GM12878 (cell line): ENCODE measurements at regions of chr5 and their contacts with region 1.

Region 1: GRCh38 chr5:149667084-149667828 is 62.9 kb upstream of the PPARGC1B start:
- DNase-seq: peak; percentile 38
- ATAC-seq: peak; percentile 90
- H3K4me3 ChIP-seq: no peak overlapping the region
- H3K27ac ChIP-seq: no peak overlapping the region
- H3K4me1 ChIP-seq: no peaks in the 10 kb centered on the region
- H3K27me3 ChIP-seq: no peaks in the 10 kb centered on the region; a peak in 1 of 4 replicates
- CTCF ChIP-seq: peak; percentile 74 to 95 (median 83)
- EP300 ChIP-seq: no peak
- POLR2A ChIP-seq: no peak
- RAD21 ChIP-seq: peak; percentile 75

Region 2: GRCh38 chr5:149646564-149646963 is 20.7 kb before region 1 on chr5:
- CTCF ChIA-PET with region 1: interaction called, 17 read pairs
- POLR2A ChIA-PET with region 1: interaction called, 3 read pairs
- RAD21 ChIA-PET with region 1: interaction called, 8 read pairs
- SMC1A ChIA-PET with region 1: interaction called, 18 read pairs
- in situ Hi-C with region 1: no loop called
- intact Hi-C with region 1: no loop called
- DNase-seq: no peak
- ATAC-seq: no peak
- H3K4me3 ChIP-seq: no peak overlapping the region
- H3K27ac ChIP-seq: no peak overlapping the region
- H3K4me1 ChIP-seq: no peaks in the 10 kb centered on the region
- H3K27me3 ChIP-seq: no peaks in the 10 kb centered on the region
- CTCF ChIP-seq: no peak
- EP300 ChIP-seq: no peak
- POLR2A ChIP-seq: no peak
- RAD21 ChIP-seq: no peak

Region 3: GRCh38 chr5:149731639-149732323 is 64.5 kb after region 1 on chr5:
- CTCF ChIA-PET with region 1: interaction called, 24 read pairs
- POLR2A ChIA-PET with region 1: interaction called, 7 read pairs
- RAD21 ChIA-PET with region 1: interaction called, 16 read pairs
- SMC1A ChIA-PET with region 1: interaction called, 12 read pairs
- in situ Hi-C with region 1: no loop called
- intact Hi-C with region 1: loop called (anchors 2 kb)
- DNase-seq: peak; percentile 62
- ATAC-seq: peak; percentile 77
- H3K4me3 ChIP-seq: peak overlapping the region; percentile 100
- H3K27ac ChIP-seq: peak overlapping the region; percentile 82
- H3K4me1 ChIP-seq: no peaks in the 10 kb centered on the region; the same call in 1 of the 2 replicates
- H3K27me3 ChIP-seq: no peaks in the 10 kb centered on the region
- CTCF ChIP-seq: no peak
- EP300 ChIP-seq: no peak
- POLR2A ChIP-seq: peak; percentile 77
- RAD21 ChIP-seq: no peak

Region 4: GRCh38 chr5:149775785-149776184 is 108.5 kb after region 1 on chr5:
- CTCF ChIA-PET with region 1: interaction called, 85 read pairs
- POLR2A ChIA-PET with region 1: interaction called, 16 read pairs
- RAD21 ChIA-PET with region 1: interaction called, 47 read pairs
- SMC1A ChIA-PET with region 1: interaction called, 53 read pairs
- in situ Hi-C with region 1: no loop called
- intact Hi-C with region 1: loop called (anchors 5 kb)
- DNase-seq: peak; percentile 23
- ATAC-seq: peak; percentile 72
- H3K4me3 ChIP-seq: no peak overlapping the region
- H3K27ac ChIP-seq: peak overlapping the region; percentile 67
- H3K4me1 ChIP-seq: peaks cover 55% of the 10 kb centered on the region
- H3K27me3 ChIP-seq: no peaks in the 10 kb centered on the region
- CTCF ChIP-seq: peak; percentile 62 to 72 (median 63)
- EP300 ChIP-seq: no peak
- POLR2A ChIP-seq: no peak
- RAD21 ChIP-seq: peak; percentile 51

Region 5: GRCh38 chr5:149816661-149817060 is 149.4 kb after region 1 on chr5:
- CTCF ChIA-PET with region 1: interaction called, 19 read pairs
- POLR2A ChIA-PET with region 1: interaction called, 3 read pairs
- RAD21 ChIA-PET with region 1: interaction called, 6 read pairs
- SMC1A ChIA-PET with region 1: interaction called, 210 read pairs
- in situ Hi-C with region 1: no loop called
- intact Hi-C with region 1: no loop called
- DNase-seq: no peak
- ATAC-seq: no peak
- H3K4me3 ChIP-seq: no peak overlapping the region
- H3K27ac ChIP-seq: no peak overlapping the region
- H3K4me1 ChIP-seq: peaks cover 1% of the 10 kb centered on the region; the same call in 1 of the 2 replicates
- H3K27me3 ChIP-seq: no peaks in the 10 kb centered on the region
- CTCF ChIP-seq: no peak
- EP300 ChIP-seq: no peak
- POLR2A ChIP-seq: no peak
- RAD21 ChIP-seq: no peak

Region 6: DNA sequence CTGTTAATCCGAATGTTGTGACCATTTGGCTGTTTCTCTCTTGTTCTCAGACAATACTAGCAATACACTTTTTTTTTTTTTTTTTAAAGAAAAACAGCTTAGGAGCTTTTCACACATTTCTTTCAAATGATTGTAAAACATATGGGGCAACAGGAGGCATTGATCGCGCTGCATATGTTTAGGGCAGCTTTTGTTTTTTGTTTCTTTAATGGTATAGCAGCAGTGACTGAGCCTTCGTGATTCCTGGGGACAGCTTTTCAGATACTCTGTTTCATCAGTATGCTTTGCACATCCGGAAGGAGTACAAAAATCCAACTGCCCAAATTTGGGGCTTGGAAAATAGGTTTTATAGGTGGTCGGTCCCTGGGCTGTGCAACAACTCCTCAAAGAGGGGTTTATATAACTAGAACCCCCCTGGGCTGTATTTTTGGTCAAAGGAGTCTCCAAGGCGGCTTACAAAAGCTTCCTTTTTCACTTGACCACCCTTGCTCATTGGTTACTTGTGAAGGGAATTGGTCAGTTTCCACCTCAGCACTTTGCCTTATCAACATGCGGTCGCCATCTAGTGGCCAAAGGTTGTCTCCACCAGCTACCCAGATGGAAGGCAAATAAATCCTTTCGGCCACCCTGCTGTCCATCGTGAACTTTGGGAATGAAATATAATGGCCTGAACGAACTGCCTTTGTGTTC is 185.5 kb after region 1 on chr5:
- CTCF ChIA-PET with region 1: interaction called, 49 read pairs
- POLR2A ChIA-PET with region 1: no interaction called
- RAD21 ChIA-PET with region 1: interaction called, 17 read pairs
- SMC1A ChIA-PET with region 1: interaction called, 12 read pairs
- in situ Hi-C with region 1: no loop called
- intact Hi-C with region 1: no loop called
- DNase-seq: no peak
- ATAC-seq: peak; percentile 96
- H3K4me3 ChIP-seq: no peak overlapping the region
- H3K27ac ChIP-seq: no peak overlapping the region
- H3K4me1 ChIP-seq: no peaks in the 10 kb centered on the region
- H3K27me3 ChIP-seq: no peaks in the 10 kb centered on the region
- CTCF ChIP-seq: peak; percentile 83 to 93 (median 87)
- EP300 ChIP-seq: no peak
- POLR2A ChIP-seq: no peak
- RAD21 ChIP-seq: peak; percentile 83